ENCODE measurements at regions of chr11 and their contacts with region 1.

Region 1: DNA sequence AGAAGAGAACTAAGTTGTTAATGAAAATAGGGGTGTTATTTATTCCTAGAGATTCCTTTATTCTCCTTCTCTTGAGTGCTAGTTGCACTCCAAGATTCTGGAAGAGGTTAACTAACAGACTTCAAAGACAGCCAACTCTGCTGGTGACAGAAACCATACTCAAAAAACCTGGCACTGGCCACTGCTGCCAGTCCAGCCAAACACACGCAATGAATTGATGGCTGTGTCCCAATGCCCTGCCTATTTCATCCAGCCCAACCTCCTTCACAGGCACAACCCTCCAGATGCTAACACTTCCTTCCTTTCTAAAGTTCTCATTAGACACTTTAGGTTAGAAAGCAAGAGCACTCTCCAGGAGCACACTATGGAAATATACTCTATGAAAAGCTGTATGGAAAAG is 150.8 kb upstream of the C11orf58 start:
- DNase-seq: no peak
- H3K4me3 ChIP-seq: no peak overlapping the region
- H3K27ac ChIP-seq: no peak overlapping the region
- H3K4me1 ChIP-seq: no peaks in the 10 kb centered on the region
- H3K27me3 ChIP-seq: peaks cover 2% of the 10 kb centered on the region
- CTCF ChIP-seq: no peak

Region 2: DNA sequence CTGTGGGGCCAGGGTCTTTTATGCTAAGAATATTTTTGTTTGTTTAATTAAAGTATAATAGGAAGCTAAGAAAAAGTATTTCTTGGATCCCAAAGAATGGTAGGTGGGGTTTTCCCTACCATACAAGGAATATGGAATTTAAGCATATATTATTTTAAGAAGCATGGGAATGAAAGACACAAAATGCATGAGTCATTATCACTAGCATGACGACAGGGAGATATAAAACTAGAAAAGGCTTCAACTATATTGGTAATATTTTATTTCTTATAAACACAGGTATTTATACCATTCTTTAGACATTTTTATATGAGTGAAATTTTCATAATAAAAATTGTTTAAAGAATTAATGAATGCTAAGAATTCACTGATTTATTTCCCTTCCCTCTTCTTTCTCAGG is 192.1 kb before region 1 on chr11:
- CTCF ChIA-PET with region 1: no interaction called
- dilution Hi-C with region 1: no loop called
- in situ Hi-C with region 1: no loop called
- intact Hi-C with region 1: loop called (anchors 5 kb)
- DNase-seq: no peak
- H3K4me3 ChIP-seq: no peak overlapping the region
- H3K27ac ChIP-seq: no peak overlapping the region
- H3K4me1 ChIP-seq: no peaks in the 10 kb centered on the region
- H3K27me3 ChIP-seq: no peaks in the 10 kb centered on the region
- CTCF ChIP-seq: no peak

Measured in mammary epithelial cell (primary cell).